ENCODE measurements at regions of chr19 and their contacts with region 1.

Region 1: GRCh38 chr19:29329460-29330134 is 116.6 kb upstream of the UQCRFS1 start:
- DNase-seq: no peak
- ATAC-seq: no peak
- H3K4me3 ChIP-seq: no peak overlapping the region
- H3K27ac ChIP-seq: no peak overlapping the region
- H3K4me1 ChIP-seq: no peaks in the 10 kb centered on the region
- H3K27me3 ChIP-seq: peaks cover 8% of the 10 kb centered on the region
- CTCF ChIP-seq: no peak

Region 2: DNA sequence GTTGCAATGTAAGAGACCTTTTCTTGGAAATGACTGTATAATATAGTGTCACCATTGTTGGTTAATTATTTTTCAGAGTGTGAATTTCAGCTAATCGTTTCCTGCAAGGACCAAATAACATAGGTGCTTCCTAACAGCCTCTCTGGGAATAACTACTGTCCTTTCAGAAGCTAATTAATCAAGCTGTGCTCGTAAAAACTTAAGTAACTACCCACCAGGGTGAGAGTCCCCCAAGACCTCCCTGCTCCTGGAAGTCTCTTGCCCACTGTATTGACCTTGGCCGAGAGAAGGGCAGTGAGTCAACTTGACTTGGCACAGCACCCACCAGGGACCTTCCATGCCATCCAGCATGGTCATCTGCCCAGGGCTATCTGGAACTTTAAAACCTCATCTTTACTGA is 166.9 kb before region 1 on chr19:
- CTCF ChIA-PET with region 1: no interaction called
- POLR2A ChIA-PET with region 1: interaction called, 12 read pairs
- in situ Hi-C with region 1: no loop called
- intact Hi-C with region 1: no loop called
- DNase-seq: no peak
- ATAC-seq: no peak
- H3K4me3 ChIP-seq: no peak overlapping the region
- H3K27ac ChIP-seq: no peak overlapping the region
- H3K4me1 ChIP-seq: no peaks in the 10 kb centered on the region
- H3K27me3 ChIP-seq: peaks cover 1% of the 10 kb centered on the region; the same call in 1 of the 2 replicates
- CTCF ChIP-seq: no peak

Measured in Panc1 (cell line).